ENCODE measurements at regions of chr13 and their contacts with region 1.

Region 1: DNA sequence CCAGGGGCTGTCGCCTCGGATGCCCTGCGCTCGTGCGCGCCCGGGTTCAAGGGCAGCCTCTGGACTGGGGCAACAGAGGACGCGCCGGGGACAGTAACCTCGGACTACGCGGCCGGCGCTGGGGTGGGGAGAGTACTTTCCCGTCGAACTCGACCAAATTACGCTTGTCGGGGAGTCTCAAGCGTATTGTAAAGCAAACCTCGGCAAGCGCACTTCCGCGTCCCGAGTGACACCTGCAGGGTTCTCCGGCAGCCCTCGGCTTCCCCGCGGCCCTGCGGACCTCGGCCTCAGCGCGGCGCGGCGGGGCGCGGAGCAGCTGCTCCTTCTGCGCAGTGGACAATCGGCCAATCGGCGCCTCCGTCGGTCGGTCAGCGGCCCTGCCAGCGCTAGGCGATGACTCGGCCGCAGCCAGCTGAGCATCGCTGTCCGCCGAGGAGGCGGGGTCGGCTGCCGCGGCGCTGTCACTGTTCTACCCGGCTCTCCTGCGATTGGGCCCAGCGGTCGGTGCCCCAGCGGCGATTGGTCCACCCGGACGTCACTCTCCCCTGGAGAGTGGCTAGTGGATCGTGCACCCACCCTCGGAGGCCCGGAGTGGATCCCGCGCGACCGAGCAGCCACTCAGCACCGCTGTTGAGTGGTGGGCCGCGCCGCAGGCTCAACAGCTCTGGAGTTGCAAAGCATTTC is at the start of gene SLC46A3:
- DNase-seq: peak; percentile 97
- ATAC-seq: peak; percentile 98
- H3K4me3 ChIP-seq: peak within 1 kb of the TSS; percentile 61 to 91 (median 87)
- H3K4me3 Mint-ChIP-seq: peak within 1 kb of the TSS; percentile 96
- H3K27ac ChIP-seq: peak within 1 kb of the TSS; percentile 84 to 89
- H3K27ac Mint-ChIP-seq: peak within 1 kb of the TSS; percentile 98
- H3K4me1 ChIP-seq: peaks cover 14 to 18% of the 10 kb centered on the region in 2 donors
- H3K4me1 Mint-ChIP-seq: peaks cover 24% of the 10 kb centered on the region
- H3K27me3 ChIP-seq: no peaks in the 10 kb centered on the region
- H3K27me3 Mint-ChIP-seq: no peaks in the 10 kb centered on the region
- CTCF ChIP-seq: peak; percentile 24
- total RNA-seq, gene SLC46A3: 12.4 and 13.1 TPM in 2 replicates

Region 2: DNA sequence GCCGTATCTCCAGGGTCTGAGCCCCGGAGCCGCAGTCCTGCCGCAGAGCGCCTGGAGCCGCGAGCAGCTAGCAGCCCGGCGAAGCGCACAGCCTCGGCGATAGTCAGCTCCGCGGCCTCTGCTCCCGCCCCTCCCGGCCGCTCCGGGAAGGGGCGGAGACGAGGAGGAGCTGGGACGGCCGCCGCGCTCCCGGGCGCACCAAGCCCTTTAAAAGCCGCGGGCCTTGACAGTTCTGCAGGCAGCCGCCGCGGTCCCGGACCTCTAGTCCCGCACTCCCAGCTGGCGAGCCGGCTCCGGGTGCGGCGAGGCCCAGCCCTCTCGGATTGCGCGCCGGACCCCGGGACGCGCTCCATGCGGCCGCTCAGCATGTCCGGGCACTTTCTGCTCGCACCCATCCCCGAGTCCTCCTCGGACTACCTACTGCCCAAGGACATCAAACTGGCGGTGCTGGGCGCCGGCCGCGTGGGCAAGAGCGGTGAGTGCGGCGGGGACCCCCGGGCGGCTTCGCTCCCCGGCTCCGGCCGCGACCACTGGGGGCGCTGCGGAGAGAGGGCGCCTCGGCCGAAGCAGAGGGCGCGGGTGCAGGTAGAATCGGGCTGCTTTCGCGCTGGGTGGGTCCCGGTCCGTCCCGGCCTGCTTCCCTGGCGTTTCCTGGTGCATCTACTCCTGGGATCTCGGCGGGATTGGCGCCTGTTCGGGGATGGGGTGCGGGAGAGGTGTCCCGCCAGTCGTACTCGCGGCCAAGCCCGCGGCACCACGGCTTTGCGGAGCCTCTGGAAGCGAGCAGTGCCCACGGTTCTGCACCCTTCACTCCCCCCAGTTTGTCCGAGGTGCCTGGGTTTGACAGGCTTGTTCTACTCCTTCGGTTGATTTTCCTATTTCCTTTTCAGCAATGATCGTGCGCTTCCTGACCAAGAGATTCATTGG is 1447.8 kb before region 1 on chr13 and contains the start of gene RASL11A:
- CTCF ChIA-PET with region 1: no interaction called
- POLR2A ChIA-PET with region 1: no interaction called
- intact Hi-C with region 1: loop called (anchors 5 kb)
- DNase-seq: peak; percentile 85
- ATAC-seq: peak; percentile 89
- H3K4me3 ChIP-seq: peak within 1 kb of the TSS; percentile 46 to 95 (median 78)
- H3K4me3 Mint-ChIP-seq: peak within 1 kb of the TSS; percentile 89
- H3K27ac ChIP-seq: peak within 1 kb of the TSS; percentile 28 to 39
- H3K27ac Mint-ChIP-seq: peak within 1 kb of the TSS; percentile 72
- H3K4me1 ChIP-seq: peaks cover 6 to 18% of the 10 kb centered on the region in 2 donors
- H3K4me1 Mint-ChIP-seq: peaks cover 33% of the 10 kb centered on the region
- H3K27me3 ChIP-seq: peaks cover 0 to 5% (median 2%) of the 10 kb centered on the region in 4 experiments
- H3K27me3 Mint-ChIP-seq: peaks cover 9% of the 10 kb centered on the region
- CTCF ChIP-seq: peak; percentile 99
- total RNA-seq, gene RASL11A: 0.89 and 1.0 TPM in 2 replicates

Region 3: DNA sequence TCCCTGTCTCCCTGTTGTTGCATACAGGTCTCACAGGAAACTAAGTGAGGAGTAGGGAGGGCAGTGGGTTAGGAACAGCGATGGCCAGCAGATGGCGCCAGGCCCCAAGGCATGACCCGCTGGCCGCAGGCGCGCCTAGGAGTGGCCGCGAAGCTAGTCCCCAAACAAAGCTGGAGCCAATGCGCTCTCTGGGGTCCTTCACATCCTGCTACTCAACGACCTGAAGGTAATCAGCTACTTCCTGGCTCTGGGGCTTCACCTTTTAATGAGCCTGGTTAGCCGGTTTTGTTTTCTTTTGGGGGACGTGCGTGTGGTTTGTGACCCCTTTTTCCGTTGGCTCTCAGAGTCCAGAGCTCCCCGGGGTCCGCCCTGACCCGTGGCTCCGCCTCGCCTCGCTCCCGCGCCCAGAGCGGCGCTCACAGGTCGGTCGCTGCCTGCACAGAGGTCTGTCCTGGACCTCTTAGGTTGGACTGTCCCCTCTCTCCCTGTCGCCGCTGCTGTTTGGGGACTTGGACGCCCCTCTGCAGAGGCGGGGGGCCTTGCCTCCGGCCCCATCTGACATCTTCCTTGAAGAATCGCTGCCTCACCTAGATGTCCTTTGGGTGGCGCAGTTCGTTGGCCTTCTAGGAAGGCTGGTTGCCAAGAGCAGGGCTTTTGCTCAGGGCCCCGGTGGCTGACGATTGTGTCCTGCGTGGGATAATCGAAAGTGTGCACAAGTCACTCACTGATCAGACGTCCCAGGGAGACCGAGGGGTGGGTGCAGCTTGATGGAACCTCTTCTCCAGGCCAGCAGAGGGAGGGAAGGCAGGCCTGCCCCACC is 1356.4 kb before region 1 on chr13:
- CTCF ChIA-PET with region 1: no interaction called
- POLR2A ChIA-PET with region 1: no interaction called
- intact Hi-C with region 1: no loop called
- DNase-seq: peak; percentile 85
- ATAC-seq: peak; percentile 91
- H3K4me3 ChIP-seq: peak overlapping the region in 4 of 5 experiments; percentile 28 to 56 (median 42)
- H3K4me3 Mint-ChIP-seq: peak overlapping the region; percentile 49
- H3K27ac ChIP-seq: no peak overlapping the region
- H3K27ac Mint-ChIP-seq: no peak overlapping the region
- H3K4me1 ChIP-seq: peaks cover 10% of the 10 kb centered on the region in 2 donors
- H3K4me1 Mint-ChIP-seq: peaks cover 12% of the 10 kb centered on the region
- H3K27me3 ChIP-seq: peaks cover 0 to 30% (median 11%) of the 10 kb centered on the region in 4 experiments
- H3K27me3 Mint-ChIP-seq: peaks cover 22% of the 10 kb centered on the region
- CTCF ChIP-seq: peak; percentile 87

Region 4: GRCh38 chr13:28423010-28423409 is 295.7 kb before region 1 on chr13:
- CTCF ChIA-PET with region 1: no interaction called
- POLR2A ChIA-PET with region 1: no interaction called
- intact Hi-C with region 1: loop called (anchors 5 kb)
- DNase-seq: peak; percentile 84
- ATAC-seq: peak; percentile 97
- H3K4me3 ChIP-seq: peak overlapping the region in 4 of 5 experiments; percentile 27 to 54 (median 38)
- H3K4me3 Mint-ChIP-seq: peak overlapping the region; percentile 79
- H3K27ac ChIP-seq: peak overlapping the region; percentile 75 to 78
- H3K27ac Mint-ChIP-seq: peak overlapping the region; percentile 84
- H3K4me1 ChIP-seq: peaks cover 23 to 25% of the 10 kb centered on the region in 2 donors
- H3K4me1 Mint-ChIP-seq: peaks cover 31% of the 10 kb centered on the region
- H3K27me3 ChIP-seq: no peaks in the 10 kb centered on the region
- H3K27me3 Mint-ChIP-seq: no peaks in the 10 kb centered on the region
- CTCF ChIP-seq: no peak

Region 5: DNA sequence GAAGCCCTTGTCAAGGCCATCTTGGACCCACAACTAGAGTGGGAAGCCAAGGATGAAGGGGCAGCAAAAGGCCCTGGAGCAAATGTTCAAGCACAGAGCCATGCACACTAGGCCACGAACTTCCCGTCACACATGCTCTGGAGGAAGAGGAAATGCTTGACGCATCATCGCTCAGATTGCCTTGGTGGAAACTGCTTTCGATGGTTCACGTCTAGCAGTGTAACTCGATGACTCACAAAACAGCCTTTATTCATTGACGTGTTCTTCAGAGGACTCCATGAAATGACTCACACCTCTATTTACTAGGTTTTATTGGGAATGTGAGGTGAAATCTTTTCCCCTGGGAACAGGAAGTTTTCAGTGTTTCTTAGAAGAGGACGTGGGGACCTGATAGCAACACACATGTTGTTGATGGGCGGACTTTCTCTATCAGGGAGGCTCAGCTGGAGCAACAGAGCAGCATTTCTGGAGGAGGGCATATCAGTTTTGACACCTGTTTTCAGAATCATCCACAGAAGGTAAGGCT is 144.0 kb before region 1 on chr13:
- CTCF ChIA-PET with region 1: no interaction called
- POLR2A ChIA-PET with region 1: no interaction called
- intact Hi-C with region 1: no loop called
- DNase-seq: peak; percentile 49
- ATAC-seq: no peak
- H3K4me3 ChIP-seq: no peak overlapping the region
- H3K4me3 Mint-ChIP-seq: no peak overlapping the region
- H3K27ac ChIP-seq: no peak overlapping the region
- H3K27ac Mint-ChIP-seq: no peak overlapping the region
- H3K4me1 ChIP-seq: peaks cover 7 to 9% of the 10 kb centered on the region in 2 donors
- H3K4me1 Mint-ChIP-seq: peaks cover 7% of the 10 kb centered on the region
- H3K27me3 ChIP-seq: peaks cover 0 to 3% (median 1%) of the 10 kb centered on the region in 4 experiments
- H3K27me3 Mint-ChIP-seq: peaks cover 16% of the 10 kb centered on the region
- CTCF ChIP-seq: no peak

Measured in B cell (primary cell).